HEK293 (cell line): ENCODE measurements at regions of chr15 and their contacts with region 1.

Region 1: GRCh38 chr15:66946578-66947164 is 118.7 kb upstream of the SMAD3 start:
- H3K4me3 ChIP-seq: no peak overlapping the region
- H3K27ac ChIP-seq: no peak overlapping the region
- H3K4me1 ChIP-seq: no peaks in the 10 kb centered on the region
- CTCF ChIP-seq: peak; percentile 86

Region 2: DNA sequence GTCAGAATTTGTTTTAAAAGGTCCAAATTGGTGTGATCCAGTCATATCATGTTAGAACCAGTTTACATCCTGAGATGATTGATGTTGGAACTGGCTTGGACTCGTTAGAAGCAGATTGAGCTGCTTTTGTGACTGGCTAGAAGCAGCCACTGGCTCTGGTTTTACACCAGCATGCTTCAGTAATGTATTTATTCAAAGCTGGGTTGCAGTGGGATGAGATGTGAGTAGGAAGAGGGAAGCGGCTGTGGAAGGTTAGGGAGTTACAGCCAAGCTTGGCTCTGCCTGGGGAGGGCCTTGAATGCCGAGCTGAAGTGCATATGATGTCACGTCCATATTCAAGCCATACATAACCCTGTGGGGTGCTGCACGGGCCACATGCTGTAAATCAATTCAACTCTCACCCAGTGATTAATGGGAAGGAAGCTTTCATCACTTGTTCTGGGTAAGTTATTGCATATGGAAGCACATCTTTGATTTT is 14.8 kb after region 1 on chr15:
- CTCF ChIA-PET with region 1: interaction called, 13 read pairs
- POLR2A ChIA-PET with region 1: no interaction called
- H3K4me3 ChIP-seq: no peak overlapping the region
- H3K27ac ChIP-seq: no peak overlapping the region
- H3K4me1 ChIP-seq: no peaks in the 10 kb centered on the region
- CTCF ChIP-seq: no peak

Region 3: DNA sequence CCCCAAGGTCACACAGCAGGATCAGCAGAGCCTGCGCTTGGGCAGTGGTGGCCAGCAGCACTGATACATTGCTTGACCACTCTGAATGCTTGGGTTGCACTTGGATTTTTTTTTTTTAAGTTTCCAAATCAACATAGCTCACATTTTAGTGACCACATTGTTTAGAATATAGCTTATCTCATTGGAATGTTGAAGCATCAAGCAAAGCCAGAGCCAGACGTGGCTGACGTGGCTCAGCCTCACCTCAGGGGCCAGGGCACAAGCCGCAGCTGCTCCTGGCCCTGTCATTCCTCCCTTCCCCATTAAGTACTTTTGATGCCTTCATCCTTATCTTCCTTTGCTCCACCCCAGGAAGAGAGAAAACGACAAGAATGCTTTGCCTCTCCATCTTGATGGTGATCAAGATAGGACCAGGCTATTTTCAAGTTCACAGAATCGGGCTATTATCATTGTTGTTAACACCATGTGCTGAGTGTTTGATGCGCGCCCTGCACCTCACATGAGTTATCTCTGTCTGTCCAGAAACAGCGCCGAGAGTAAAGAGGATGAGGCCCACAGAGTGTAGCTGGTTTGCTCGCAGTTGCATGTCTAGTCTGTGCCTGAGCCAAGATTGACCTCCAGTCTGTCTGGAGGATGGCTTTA is 232.0 kb after region 1 on chr15:
- CTCF ChIA-PET with region 1: interaction called, 15 read pairs
- POLR2A ChIA-PET with region 1: no interaction called
- H3K4me3 ChIP-seq: no peak overlapping the region
- H3K27ac ChIP-seq: no peak overlapping the region
- H3K4me1 ChIP-seq: 0 out of 2 replicates have a peak, but pooled peaks cover 2% of the 10 kb centered on the region
- CTCF ChIP-seq: no peak

Region 4: GRCh38 chr15:67254238-67255175 is 307.8 kb after region 1 on chr15 and contains the starts of genes AAGAB and IQCH:
- CTCF ChIA-PET with region 1: no interaction called
- POLR2A ChIA-PET with region 1: no interaction called
- H3K4me3 ChIP-seq: peak within 1 kb of the TSS; percentile 94
- H3K27ac ChIP-seq: peak within 1 kb of the TSS; percentile 83
- H3K4me1 ChIP-seq: no peaks in the 10 kb centered on the region
- CTCF ChIP-seq: peak; percentile 49; the same call in 1 of the 2 replicates

Region 5: DNA sequence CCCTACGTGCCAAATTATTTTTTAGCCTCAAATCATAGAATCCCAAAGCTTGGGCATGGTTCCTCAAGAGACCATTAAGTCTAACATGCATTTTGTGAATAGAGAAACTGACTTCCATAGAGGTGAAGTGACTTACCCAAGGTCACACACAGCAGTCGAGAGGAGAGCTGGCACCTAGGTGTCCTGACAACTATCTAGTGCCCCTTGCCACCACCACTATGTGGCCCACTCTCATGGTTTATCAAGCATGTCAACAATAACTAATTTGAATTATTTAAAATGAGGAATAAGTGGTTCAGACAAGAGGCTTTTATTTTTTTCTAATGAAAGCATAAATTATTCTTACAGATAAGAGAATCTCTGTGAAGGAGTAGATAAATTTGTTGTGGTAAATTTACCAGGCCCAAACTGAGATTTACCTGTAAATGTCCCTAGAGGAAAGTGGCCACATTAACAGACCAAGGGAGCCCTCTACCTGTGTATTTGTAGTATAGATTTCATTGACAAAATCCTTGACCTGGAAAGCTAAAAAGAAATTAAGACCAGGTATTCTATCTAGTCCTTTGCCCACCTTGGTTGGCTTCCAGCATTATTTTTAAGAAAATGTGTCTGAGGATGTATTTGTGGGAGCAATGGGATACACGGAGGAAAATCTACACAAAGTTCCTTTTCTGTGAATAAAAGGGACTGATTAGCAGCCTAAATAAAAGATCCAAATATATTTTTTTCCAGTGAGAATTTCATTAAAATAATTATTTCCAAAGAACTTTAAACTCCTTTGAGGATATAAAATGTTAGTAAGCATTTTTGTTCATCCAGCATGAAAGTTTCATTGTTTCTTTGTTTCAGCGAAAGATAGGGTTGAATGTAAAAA is 357.1 kb after region 1 on chr15:
- CTCF ChIA-PET with region 1: interaction called, 120 read pairs
- POLR2A ChIA-PET with region 1: interaction called, 3 read pairs
- H3K4me3 ChIP-seq: no peak overlapping the region
- H3K27ac ChIP-seq: no peak overlapping the region
- H3K4me1 ChIP-seq: peaks cover 9% of the 10 kb centered on the region; the same call in 1 of the 2 replicates
- CTCF ChIP-seq: peak; percentile 30; the same call in 1 of the 2 replicates

Region 6: DNA sequence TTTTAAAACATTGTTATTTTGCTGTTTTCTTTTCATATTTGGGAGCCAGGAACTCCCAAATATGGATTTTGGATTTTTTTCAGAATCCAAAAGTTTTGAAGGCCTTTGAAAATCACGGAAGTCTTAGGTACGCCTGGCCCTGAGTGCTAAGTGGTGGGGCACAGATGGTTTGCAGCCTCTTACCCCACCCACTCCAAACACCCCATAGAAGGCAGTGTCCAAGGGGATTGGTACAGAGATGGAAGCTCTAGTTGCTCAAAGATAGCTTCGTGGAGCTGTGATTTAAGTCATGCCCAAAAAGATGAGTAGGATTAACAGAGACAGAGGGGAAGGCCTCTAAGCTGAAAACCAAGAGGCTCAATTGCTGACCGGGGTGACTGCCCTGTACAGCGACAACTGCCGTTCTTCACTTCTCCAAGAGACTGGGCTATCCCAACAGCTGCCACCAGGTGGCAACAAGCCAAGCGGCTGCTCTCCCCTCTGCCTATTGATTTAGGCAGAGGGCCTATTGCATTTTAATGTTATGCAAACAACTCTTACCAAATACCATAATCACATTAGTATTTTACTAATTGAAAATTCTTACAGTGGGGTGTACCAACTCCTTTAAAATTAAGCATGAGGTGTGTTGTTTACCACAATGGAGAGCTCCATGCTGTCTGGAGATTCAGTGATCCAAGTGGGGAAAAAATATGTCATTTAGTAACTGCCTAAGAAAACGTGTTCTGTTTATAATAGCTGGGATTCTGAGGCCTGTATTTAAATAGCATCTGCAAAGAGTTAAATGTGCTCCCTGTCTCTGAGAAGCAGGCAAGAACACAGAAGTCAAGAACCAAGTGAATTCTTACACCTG is 510.2 kb after region 1 on chr15:
- CTCF ChIA-PET with region 1: interaction called, 10 read pairs
- POLR2A ChIA-PET with region 1: no interaction called
- H3K4me3 ChIP-seq: no peak overlapping the region
- H3K27ac ChIP-seq: no peak overlapping the region
- H3K4me1 ChIP-seq: no peaks in the 10 kb centered on the region
- CTCF ChIP-seq: peak; percentile 76